ENCODE measurements at regions of chr3 and their contacts with region 1.

Region 1: GRCh38 chr3:182980204-182981037 is at the start of gene DCUN1D1:
- DNase-seq: peak; percentile 19
- ATAC-seq: peak; percentile 91
- H3K4me3 ChIP-seq: peak within 1 kb of the TSS; percentile 85
- H3K27ac ChIP-seq: peak within 1 kb of the TSS; percentile 53
- H3K4me1 ChIP-seq: peaks cover 9% of the 10 kb centered on the region
- H3K27me3 ChIP-seq: no peaks in the 10 kb centered on the region
- CTCF ChIP-seq: no peak
- EP300 ChIP-seq: no peak
- POLR2A ChIP-seq: peak; percentile 84
- RAD21 ChIP-seq: no peak
- polyA plus RNA-seq, gene DCUN1D1: 19.8 to 47.4 TPM

Region 2: GRCh38 chr3:181316486-181316885 is 1663.9 kb before region 1 on chr3:
- CTCF ChIA-PET with region 1: no interaction called
- POLR2A ChIA-PET with region 1: interaction called, 10 read pairs
- RAD21 ChIA-PET with region 1: no interaction called
- SMC1A ChIA-PET with region 1: no interaction called
- in situ Hi-C with region 1: no loop called
- intact Hi-C with region 1: no loop called
- DNase-seq: no peak
- ATAC-seq: no peak
- H3K4me3 ChIP-seq: no peak overlapping the region
- H3K27ac ChIP-seq: no peak overlapping the region
- H3K4me1 ChIP-seq: no peaks in the 10 kb centered on the region
- H3K27me3 ChIP-seq: no peaks in the 10 kb centered on the region; a peak in 1 of 4 replicates
- CTCF ChIP-seq: no peak
- EP300 ChIP-seq: no peak
- POLR2A ChIP-seq: no peak
- RAD21 ChIP-seq: no peak

Region 3: DNA sequence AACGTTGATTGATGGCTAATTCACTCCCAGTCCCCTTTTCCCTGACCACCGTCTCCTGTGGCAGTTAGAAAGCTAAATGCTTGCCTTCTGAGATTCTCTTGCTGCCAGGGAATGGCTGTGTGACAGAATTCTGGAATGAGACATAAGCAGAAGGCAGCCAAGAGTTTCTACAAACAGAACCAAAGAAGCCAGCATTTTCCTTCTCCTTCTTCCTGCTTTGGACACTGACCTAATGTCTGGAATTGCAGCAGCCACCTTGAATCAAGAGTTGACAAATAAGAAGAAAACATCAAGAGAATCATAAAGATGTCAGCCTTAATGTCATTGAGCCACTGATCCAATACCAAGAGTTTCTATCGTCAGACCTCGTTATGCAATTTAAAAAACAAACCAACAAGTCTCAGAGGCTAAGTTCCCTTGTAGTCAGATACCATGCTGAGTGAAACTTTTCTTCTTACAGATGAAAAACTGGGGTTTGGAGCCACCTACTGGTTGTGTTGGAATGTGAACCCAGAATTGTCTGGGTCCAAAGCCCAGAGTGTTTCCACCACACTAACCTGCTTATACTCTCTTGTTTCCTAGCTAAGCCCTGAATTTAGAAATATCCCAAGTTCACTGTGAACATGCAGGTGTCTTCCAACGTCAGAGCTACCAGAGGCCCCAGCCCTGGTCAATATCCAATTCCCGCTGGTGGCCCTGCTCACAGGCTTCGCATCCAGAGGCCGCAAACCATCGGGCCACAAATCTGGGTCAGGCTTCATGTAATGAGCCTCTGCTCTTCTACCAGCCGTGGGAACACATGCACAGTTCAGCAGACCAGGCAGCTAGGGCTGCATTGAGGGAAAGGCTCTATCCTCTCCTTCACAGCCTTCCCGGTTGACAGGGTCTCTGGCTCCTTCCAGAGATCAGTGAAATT is 405.5 kb after region 1 on chr3:
- CTCF ChIA-PET with region 1: no interaction called
- POLR2A ChIA-PET with region 1: no interaction called
- RAD21 ChIA-PET with region 1: no interaction called
- SMC1A ChIA-PET with region 1: no interaction called
- in situ Hi-C with region 1: no loop called
- intact Hi-C with region 1: no loop called
- DNase-seq: no peak
- ATAC-seq: peak; percentile 85
- H3K4me3 ChIP-seq: no peak overlapping the region
- H3K27ac ChIP-seq: no peak overlapping the region
- H3K4me1 ChIP-seq: peaks cover 7% of the 10 kb centered on the region; the same call in 1 of the 2 replicates
- H3K27me3 ChIP-seq: no peaks in the 10 kb centered on the region
- CTCF ChIP-seq: peak; percentile 63 to 87 (median 81); a peak in 5 of 6 replicates
- EP300 ChIP-seq: no peak
- POLR2A ChIP-seq: no peak
- RAD21 ChIP-seq: peak; percentile 84

Region 4: GRCh38 chr3:183490670-183491069 is 510.2 kb after region 1 on chr3:
- CTCF ChIA-PET with region 1: no interaction called
- POLR2A ChIA-PET with region 1: no interaction called
- RAD21 ChIA-PET with region 1: no interaction called
- SMC1A ChIA-PET with region 1: no interaction called
- in situ Hi-C with region 1: no loop called
- intact Hi-C with region 1: no loop called
- DNase-seq: no peak
- ATAC-seq: no peak
- H3K4me3 ChIP-seq: no peak overlapping the region
- H3K27ac ChIP-seq: no peak overlapping the region
- H3K4me1 ChIP-seq: no peaks in the 10 kb centered on the region
- H3K27me3 ChIP-seq: no peaks in the 10 kb centered on the region
- CTCF ChIP-seq: no peak
- EP300 ChIP-seq: no peak
- POLR2A ChIP-seq: no peak
- RAD21 ChIP-seq: no peak